Posterior vena cava (tissue), 2 donors: ENCODE measurements at regions of chr3 and their contacts with region 1.

Region 1: DNA sequence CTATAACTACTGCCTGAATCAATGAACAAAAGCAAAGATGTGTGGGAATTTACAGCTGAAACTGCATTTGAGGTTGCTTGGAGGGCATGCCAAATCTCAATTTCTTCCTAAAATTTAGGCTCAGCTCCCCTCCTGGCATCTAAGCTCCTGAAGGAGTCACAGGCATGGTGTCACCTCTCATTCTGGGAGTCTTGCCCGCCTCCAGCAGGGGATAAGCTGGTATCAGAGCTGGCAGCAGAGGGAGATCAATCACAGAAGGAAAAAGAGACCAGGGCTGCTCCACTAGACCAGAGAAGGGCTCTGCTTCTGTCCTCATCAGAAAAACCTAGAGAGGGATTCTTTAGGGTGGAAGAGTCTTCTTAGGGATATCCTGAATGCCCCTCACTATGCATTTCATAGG is 150.4 kb upstream of the SLC6A11 start:
- DNase-seq: no peak

Region 2: GRCh38 chr3:10142707-10143566 is 522.7 kb before region 1 on chr3:
- intact Hi-C with region 1: no loop called
- DNase-seq: no peak

Region 3: GRCh38 chr3:10635446-10636076 is 30.0 kb before region 1 on chr3:
- intact Hi-C with region 1: loop called in 1 of 2 experiments (anchors 1 kb)
- DNase-seq: no peak

Region 4: GRCh38 chr3:10646531-10647335 is 18.9 kb before region 1 on chr3:
- intact Hi-C with region 1: loop called in 1 of 2 experiments (anchors 1 kb)
- DNase-seq: peak; percentile 41

Region 5: GRCh38 chr3:10707400-10708215 is 42.0 kb after region 1 on chr3:
- intact Hi-C with region 1: no loop called
- DNase-seq: no peak